ENCODE measurements at regions of chr4 and their contacts with region 1.

Region 1: DNA sequence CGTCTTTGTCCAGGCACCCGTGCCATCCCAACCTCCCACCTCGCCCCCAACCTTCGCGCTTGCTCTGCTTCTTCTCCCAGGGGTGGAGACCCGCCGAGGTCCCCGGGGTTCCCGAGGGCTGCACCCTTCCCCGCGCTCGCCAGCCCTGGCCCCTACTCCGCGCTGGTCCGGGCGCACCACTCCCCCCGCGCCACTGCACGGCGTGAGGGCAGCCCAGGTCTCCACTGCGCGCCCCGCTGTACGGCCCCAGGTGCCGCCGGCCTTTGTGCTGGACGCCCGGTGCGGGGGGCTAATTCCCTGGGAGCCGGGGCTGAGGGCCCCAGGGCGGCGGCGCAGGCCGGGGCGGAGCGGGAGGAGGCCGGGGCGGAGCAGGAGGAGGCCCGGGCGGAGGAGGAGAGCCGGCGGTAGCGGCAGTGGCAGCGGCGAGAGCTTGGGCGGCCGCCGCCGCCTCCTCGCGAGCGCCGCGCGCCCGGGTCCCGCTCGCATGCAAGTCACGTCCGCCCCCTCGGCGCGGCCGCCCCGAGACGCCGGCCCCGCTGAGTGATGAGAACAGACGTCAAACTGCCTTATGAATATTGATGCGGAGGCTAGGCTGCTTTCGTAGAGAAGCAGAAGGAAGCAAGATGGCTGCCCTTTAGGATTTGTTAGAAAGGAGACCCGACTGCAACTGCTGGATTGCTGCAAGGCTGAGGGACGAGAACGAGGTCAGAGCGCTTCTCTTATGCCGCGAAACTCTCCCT is at the start of gene TET2:
- DNase-seq: peak; percentile 79 to 83
- ATAC-seq: peak; percentile 88 to 94 (median 90)
- H3K4me3 ChIP-seq: peak within 1 kb of the TSS; percentile 63 to 95 (median 85)
- H3K27ac ChIP-seq: peak within 1 kb of the TSS; percentile 69 to 97 (median 87)
- H3K4me1 ChIP-seq: peaks cover 0 to 47% (median 33%) of the 10 kb centered on the region in 9 donors
- H3K27me3 ChIP-seq: no peaks in the 10 kb centered on the region
- CTCF ChIP-seq: peak in 1 of 9 donors; percentile 2
- total RNA-seq, gene TET2: 12.1 to 20.6 (median 17.0) TPM

Region 2: DNA sequence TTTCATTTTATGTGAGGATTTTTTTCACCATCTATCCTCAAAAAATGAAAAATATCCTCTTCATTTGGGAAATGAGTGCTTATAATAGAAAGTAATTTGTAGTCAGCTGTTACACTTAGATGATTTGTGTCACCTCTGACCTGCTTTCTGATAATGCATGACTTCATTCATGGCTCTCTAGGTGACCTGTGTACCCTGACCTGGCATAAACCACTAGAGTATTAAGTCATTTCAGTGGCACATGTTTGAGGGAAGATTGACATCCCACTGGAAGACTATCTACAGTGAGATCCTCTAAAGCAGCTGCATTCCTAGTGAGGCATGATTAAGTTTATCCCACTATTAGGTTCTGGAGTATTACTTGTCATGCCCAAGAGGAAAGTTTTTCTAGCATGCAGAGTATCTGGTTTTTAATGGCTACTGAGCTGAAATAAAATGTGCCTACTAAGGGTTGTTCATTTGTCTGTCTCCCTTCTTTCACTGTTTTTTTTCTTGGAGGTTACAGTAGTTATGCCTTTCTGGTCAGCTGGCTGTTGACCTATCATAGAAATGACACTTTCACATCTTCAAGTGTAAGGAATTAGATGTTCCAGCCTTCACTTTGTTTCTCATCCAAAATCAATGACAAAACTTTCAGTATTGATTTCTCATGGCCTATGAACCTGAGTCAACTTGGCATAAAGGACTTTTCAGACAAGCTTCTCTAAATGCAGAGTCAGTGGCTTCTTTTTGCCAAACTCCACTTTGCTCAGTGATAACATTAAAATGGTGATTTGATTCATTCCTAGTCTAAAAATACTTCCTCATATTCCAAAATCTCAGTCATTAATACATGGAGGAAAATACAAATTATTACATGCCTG is 33.3 kb after region 1 on chr4:
- intact Hi-C with region 1: loop called in 1 of 10 experiments (anchors 5 kb)
- DNase-seq: no peak
- ATAC-seq: peak in 3 of 8 donors; percentile 14 to 56 (median 53)
- H3K4me3 ChIP-seq: no peak overlapping the region
- H3K27ac ChIP-seq: peak overlapping the region in 1 of 10 donors; percentile 6
- H3K4me1 ChIP-seq: peaks cover 0 to 47% (median 31%) of the 10 kb centered on the region in 9 donors
- H3K27me3 ChIP-seq: no peaks in the 10 kb centered on the region
- CTCF ChIP-seq: no peak

Region 3: GRCh38 chr4:105241451-105241850 is 95.0 kb after region 1 on chr4:
- intact Hi-C with region 1: loop called in 5 of 10 experiments (anchors 5 to 10 kb)
- DNase-seq: peak; percentile 68 to 69
- ATAC-seq: peak; percentile 82 to 99 (median 96)
- H3K4me3 ChIP-seq: no peak overlapping the region
- H3K27ac ChIP-seq: peak overlapping the region in 3 of 10 donors; percentile 7 to 28 (median 16)
- H3K4me1 ChIP-seq: peaks cover 0 to 32% (median 10%) of the 10 kb centered on the region in 9 donors
- H3K27me3 ChIP-seq: no peaks in the 10 kb centered on the region
- CTCF ChIP-seq: no peak

Region 4: DNA sequence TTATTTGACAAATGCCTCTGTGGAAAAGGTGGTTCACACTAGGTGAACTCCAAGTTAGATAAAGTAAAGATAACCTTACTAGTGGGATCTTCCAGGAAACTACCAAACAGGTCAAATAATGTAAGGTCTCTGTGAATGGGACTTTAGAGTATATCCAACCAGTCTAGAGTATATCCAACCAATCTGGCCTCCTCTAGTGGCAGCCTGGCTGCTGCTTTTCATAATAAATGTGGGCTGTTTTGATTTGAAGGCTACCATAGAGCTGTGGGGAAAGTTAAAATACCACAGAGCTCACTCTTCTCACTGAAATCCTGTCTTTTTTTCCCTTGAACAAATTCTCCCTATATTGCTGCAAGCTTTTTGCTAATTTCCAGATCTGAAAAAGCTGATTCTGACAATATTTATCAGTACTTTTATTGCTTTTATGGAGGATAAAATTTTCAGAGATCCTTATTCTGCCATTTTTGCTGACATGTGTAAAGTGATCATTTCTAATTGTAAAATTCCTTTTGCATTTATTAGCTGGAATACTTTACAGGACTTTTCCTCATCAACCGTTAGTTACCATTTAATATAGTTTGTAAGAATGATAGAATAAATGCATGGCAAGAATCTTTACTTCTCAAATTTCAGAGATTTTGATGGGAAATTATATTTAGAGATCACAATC is 111.5 kb after region 1 on chr4:
- intact Hi-C with region 1: loop called in 2 of 10 experiments (anchors 2 to 10 kb)
- DNase-seq: no peak
- ATAC-seq: no peak
- H3K4me3 ChIP-seq: no peak overlapping the region
- H3K27ac ChIP-seq: no peak overlapping the region
- H3K4me1 ChIP-seq: no peaks in the 10 kb centered on the region
- H3K27me3 ChIP-seq: no peaks in the 10 kb centered on the region
- CTCF ChIP-seq: no peak

Region 5: DNA sequence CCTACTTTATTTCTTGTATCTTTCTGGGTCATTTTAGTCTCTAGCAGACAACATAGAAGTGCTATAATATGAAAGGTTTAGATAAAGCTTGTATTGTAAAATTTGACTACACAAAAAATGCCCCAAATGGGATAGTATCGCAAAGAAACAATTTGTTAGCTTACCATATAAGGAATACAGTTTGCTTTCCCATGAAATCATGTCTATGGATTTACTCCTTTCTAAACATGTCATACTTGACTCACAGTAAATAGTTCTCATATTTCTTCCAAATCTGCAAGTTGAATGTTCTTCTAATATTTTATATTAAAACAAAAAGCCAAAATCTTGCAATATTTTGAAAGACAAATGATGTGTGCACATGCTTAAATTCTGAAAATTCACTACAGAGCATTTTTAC is 223.5 kb after region 1 on chr4:
- intact Hi-C with region 1: loop called in 3 of 10 experiments (anchors 10 kb)
- DNase-seq: no peak
- ATAC-seq: no peak
- H3K4me3 ChIP-seq: no peak overlapping the region
- H3K27ac ChIP-seq: no peak overlapping the region
- H3K4me1 ChIP-seq: peaks cover 0 to 20% (median 7%) of the 10 kb centered on the region in 9 donors
- H3K27me3 ChIP-seq: no peaks in the 10 kb centered on the region
- CTCF ChIP-seq: no peak

Region 6: DNA sequence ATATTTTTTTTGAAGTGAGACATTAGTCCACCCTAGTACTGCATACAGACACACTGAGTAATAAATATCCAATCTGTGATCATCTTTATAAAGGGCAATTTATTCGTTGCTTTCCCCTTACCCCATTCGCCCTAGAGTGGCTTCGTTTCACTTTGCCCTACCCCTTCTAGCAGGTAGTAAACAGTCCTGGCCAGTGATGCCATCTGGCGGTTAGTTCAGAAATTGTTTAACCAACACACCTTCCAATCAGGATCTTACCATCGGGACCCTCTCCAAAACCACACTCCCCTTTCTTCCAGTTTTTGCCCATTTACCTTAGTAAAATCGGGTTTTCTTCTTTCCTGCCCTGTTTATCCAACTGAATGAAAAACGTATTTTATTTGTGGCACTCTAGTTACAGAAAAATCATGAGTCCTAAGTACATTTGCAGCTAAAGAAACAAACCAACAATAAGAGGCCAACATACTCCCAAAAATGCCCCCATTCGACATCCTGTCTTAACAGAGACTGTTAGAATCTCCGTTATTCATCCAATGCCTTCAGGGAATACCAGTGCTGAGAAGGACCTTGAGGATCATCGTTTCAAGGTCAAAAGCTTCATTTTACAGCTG is 325.2 kb after region 1 on chr4:
- intact Hi-C with region 1: loop called in 9 of 10 experiments (anchors 1 to 5 kb)
- DNase-seq: peak in 1 of 2 donors; percentile 76
- ATAC-seq: peak in 5 of 8 donors; percentile 43 to 66 (median 49)
- H3K4me3 ChIP-seq: peak overlapping the region in 8 of 10 donors; percentile 79 to 97 (median 91)
- H3K27ac ChIP-seq: peak overlapping the region in 9 of 10 donors; percentile 97 to 100 (median 98)
- H3K4me1 ChIP-seq: peaks cover 5 to 67% (median 47%) of the 10 kb centered on the region in 9 donors
- H3K27me3 ChIP-seq: no peaks in the 10 kb centered on the region
- CTCF ChIP-seq: peak; percentile 39 to 84 (median 76)

Region 7: DNA sequence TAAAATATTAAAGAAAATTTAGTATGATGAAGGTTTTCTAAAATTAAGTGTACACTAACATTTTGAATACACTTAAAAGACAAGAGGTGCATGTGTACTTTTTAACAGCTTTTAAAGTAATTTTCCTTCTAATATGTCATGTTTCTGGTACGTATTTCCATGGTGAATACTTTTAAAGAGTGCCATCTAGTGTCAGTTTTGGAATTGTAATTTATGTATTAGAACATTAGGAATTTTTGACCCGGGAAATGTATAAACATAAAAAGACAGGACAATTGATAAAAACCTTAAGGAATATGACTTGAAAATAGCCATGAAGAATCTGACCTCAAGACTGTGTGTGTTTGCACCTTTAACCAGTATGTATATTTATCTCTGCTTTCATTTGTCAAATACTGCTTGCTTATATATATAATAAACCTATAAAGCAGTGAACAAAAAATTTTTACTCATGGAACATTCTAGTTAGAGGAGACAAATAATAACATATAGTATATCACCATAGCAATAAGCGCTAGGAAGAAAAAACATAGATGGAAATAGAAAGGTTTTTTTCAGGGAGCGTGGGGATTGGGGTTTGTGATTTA is 569.3 kb after region 1 on chr4:
- intact Hi-C with region 1: loop called in 2 of 10 experiments (anchors 5 to 10 kb)
- DNase-seq: no peak
- ATAC-seq: peak in 1 of 8 donors; percentile 45
- H3K4me3 ChIP-seq: peak overlapping the region in 2 of 10 donors; percentile 3 to 17
- H3K27ac ChIP-seq: no peak overlapping the region
- H3K4me1 ChIP-seq: peaks cover 0 to 20% (median 0%) of the 10 kb centered on the region in 9 donors
- H3K27me3 ChIP-seq: no peaks in the 10 kb centered on the region
- CTCF ChIP-seq: peak; percentile 31 to 77 (median 62)

Measured in heart right ventricle (tissue), 16 donors.